PC-9 (cell line): ENCODE measurements at regions of chr3 and their contacts with region 1.

Region 1: GRCh38 chr3:16168211-16168610 is 6.3 kb upstream of the GALNT15 start:
- DNase-seq: no peak
- H3K4me3 ChIP-seq: no peak overlapping the region
- H3K27ac ChIP-seq: no peak overlapping the region
- H3K4me1 ChIP-seq: no peaks in the 10 kb centered on the region
- H3K27me3 ChIP-seq: peaks cover 13% of the 10 kb centered on the region; the same call in 1 of the 2 replicates
- CTCF ChIP-seq: no peak

Region 2: GRCh38 chr3:15693355-15693754 is 474.9 kb before region 1 on chr3:
- CTCF ChIA-PET with region 1: no interaction called
- POLR2A ChIA-PET with region 1: no interaction called
- intact Hi-C with region 1: no loop called
- DNase-seq: no peak
- H3K4me3 ChIP-seq: no peak overlapping the region
- H3K27ac ChIP-seq: no peak overlapping the region
- H3K4me1 ChIP-seq: no peaks in the 10 kb centered on the region
- H3K27me3 ChIP-seq: no peaks in the 10 kb centered on the region
- CTCF ChIP-seq: no peak

Region 3: GRCh38 chr3:16130066-16130465 is 38.1 kb before region 1 on chr3:
- CTCF ChIA-PET with region 1: no interaction called
- POLR2A ChIA-PET with region 1: no interaction called
- intact Hi-C with region 1: no loop called
- DNase-seq: no peak
- H3K4me3 ChIP-seq: no peak overlapping the region
- H3K27ac ChIP-seq: no peak overlapping the region
- H3K4me1 ChIP-seq: peaks cover 1% of the 10 kb centered on the region; the same call in 1 of the 2 replicates
- H3K27me3 ChIP-seq: no peaks in the 10 kb centered on the region
- CTCF ChIP-seq: no peak

Region 4: DNA sequence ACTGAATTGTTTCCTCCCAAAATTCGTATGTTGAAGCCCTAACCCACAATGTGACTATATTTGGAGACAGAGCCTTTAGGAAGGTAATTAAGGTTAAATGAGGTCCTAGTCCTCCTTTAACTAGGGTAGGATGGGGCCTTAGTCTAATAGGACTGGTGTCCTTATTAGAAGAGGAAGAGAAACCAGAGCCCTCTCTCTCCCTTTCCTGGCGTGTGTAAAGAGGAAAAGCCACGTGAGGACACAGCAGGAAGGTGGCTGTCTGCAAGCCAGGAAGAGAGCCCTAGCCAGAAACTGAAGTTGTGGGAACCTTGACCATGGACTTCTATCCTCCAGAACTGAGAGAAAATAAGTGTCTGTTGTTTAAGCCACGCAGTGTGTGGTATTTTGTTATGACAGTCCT is 191.1 kb after region 1 on chr3:
- CTCF ChIA-PET with region 1: no interaction called
- POLR2A ChIA-PET with region 1: interaction called, 18 read pairs
- intact Hi-C with region 1: no loop called
- DNase-seq: no peak
- H3K4me3 ChIP-seq: no peak overlapping the region
- H3K27ac ChIP-seq: no peak overlapping the region
- H3K4me1 ChIP-seq: no peaks in the 10 kb centered on the region
- H3K27me3 ChIP-seq: no peaks in the 10 kb centered on the region
- CTCF ChIP-seq: no peak